ENCODE measurements at regions of chr15 and their contacts with region 1.

Region 1: DNA sequence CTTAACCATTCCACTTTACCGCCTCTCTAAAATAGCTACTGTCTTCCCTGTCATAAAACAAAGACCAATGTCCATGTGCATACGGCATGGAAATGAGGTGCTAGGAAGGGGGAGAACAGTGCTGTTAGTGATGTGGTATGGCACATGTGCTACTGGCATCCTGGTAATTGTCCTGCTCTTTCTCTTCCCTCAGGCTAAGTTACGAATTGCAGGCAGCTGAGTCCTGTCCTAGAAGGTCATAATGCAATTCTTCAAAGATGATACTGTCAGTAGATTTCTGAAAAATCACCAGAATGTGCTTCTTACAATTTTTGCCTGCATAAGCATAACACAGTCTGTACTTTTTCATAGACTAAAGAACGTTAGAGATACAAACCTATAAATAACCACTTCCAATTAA is 216.8 kb downstream of the RSL24D1 start:
- DNase-seq: no peak
- ATAC-seq: no peak
- H3K4me3 ChIP-seq: no peak overlapping the region
- H3K27ac ChIP-seq: no peak overlapping the region
- H3K4me1 ChIP-seq: no peaks in the 10 kb centered on the region
- H3K27me3 ChIP-seq: no peaks in the 10 kb centered on the region
- CTCF ChIP-seq: no peak
- POLR2A ChIP-seq: no peak
- RAD21 ChIP-seq: no peak

Region 2: GRCh38 chr15:55031727-55032126 is 51.8 kb after region 1 on chr15:
- CTCF ChIA-PET with region 1: no interaction called
- POLR2A ChIA-PET with region 1: no interaction called
- dilution Hi-C with region 1: no loop called
- in situ Hi-C with region 1: no loop called
- intact Hi-C with region 1: loop called (anchors 2 kb)
- DNase-seq: no peak
- ATAC-seq: no peak
- H3K4me3 ChIP-seq: no peak overlapping the region
- H3K27ac ChIP-seq: no peak overlapping the region
- H3K4me1 ChIP-seq: no peaks in the 10 kb centered on the region
- H3K27me3 ChIP-seq: no peaks in the 10 kb centered on the region
- CTCF ChIP-seq: no peak
- POLR2A ChIP-seq: no peak
- RAD21 ChIP-seq: no peak